ENCODE measurements at regions of chr17 and their contacts with region 1.

Region 1: DNA sequence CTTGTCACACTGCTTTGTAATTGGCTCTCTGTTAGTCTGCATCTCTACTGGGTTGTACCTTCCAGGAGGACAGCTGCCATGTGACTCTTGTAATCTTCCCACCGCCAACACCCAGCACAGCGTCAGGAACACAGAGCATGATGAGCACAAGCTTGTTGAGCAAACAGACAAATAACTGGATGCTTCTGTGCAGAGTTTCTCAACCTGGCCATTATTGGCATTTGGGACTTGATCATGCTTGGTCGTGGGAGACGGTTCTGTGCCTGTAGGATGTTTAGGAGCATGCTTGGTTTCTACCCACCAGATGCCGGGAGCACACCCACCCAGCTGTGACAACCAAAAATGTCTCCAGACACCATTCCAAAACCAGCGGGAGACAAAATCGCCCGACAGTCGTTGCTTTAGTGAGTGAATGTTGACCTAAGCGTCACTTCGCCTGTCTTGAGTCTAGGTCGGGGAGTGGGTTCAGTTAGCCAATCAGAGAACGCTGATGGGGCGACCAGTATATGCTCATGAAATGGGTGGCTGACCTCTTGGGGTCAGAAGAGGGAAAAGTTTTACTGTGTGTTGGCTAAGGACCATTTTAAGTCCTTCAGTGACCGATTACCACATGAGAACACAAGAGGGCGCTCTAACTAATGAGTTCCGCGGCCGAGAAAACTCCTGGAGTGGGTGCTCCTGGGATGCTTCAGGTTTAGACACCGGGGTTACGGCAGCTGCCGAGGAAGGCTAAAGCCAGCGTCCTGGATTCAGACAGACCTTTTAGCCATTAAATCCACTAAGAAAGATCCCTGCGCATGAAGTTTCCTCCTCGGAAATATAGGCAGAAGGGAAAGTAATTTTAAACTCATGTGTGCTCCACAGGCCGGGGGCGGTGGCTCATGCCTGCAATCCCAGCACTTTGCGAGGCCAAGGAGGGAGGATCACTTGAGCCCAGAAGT is 57.8 kb upstream of the TEX2 start:
- DNase-seq: no peak
- H3K4me3 ChIP-seq: peak overlapping the region; percentile 8; the same call in 1 of the 2 replicates
- CTCF ChIP-seq: peak; percentile 63

Region 2: GRCh38 chr17:64297467-64298098 is 23.3 kb before region 1 on chr17:
- CTCF ChIA-PET with region 1: interaction called, 23 read pairs
- POLR2A ChIA-PET with region 1: no interaction called
- DNase-seq: no peak
- H3K4me3 ChIP-seq: no peak overlapping the region
- CTCF ChIP-seq: no peak

Region 3: DNA sequence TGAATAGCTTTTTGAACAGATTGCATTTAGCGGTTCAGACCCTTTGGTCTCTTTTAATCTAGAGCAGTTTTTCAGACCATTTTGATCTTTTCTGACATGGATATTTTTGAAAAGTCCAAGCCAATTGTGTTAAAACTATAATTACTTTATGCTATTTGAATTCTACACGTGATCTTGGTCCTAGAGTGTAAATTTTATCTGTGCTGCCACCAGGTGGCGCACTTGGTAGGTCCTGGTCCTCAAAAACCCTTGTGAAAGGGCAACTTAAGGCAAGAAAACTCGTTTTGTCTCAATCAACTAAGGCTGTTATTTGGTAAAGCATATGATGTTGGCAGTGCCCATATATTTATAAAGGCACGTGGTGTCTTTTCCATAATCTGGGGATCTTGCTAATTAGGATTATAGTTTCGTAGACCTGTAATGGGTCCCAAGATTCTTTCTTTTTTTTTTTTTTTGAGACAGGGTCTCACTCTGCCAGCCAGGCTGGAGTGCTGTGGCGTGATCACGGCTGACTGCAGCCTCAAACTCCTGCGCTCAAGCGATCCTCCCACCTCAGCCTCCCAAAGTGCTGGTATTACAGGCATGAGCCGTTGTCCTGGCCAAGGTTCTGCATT is 13.9 kb before region 1 on chr17:
- CTCF ChIA-PET with region 1: interaction called, 57 read pairs
- POLR2A ChIA-PET with region 1: no interaction called
- DNase-seq: peak; percentile 2
- H3K4me3 ChIP-seq: no peak overlapping the region
- CTCF ChIP-seq: peak; percentile 59

Region 4: DNA sequence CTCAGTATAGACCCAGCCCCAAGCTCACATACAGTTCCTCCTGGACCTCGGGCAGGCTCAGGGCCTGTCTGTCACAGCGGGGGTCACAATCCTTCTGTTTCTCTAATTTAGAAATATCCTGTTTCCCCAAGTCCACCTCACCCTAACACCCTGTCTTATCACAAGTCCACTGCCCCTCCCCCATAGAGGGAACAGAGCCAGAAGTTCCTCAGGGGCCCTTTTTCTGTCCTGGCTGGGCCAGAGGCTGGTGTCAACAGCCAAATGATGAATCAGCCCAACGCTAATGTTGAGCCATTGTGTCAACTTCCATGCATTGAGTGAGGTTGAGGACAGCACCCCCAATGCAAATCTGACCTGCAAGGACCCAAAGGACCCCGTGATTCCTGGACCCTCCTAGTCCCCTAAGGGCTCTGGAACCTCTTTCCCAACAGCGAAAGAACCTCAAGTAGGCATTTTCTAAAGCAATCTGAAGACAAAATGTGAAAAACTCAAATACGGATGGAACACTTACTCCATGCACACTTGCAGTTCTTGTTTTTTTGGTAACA is 11.1 kb after region 1 on chr17:
- CTCF ChIA-PET with region 1: interaction called, 50 read pairs
- POLR2A ChIA-PET with region 1: no interaction called
- DNase-seq: no peak
- H3K4me3 ChIP-seq: no peak overlapping the region
- CTCF ChIP-seq: no peak

Region 5: GRCh38 chr17:64339516-64340490 is 18.9 kb after region 1 on chr17:
- CTCF ChIA-PET with region 1: interaction called, 20 read pairs
- POLR2A ChIA-PET with region 1: no interaction called
- DNase-seq: no peak
- H3K4me3 ChIP-seq: no peak overlapping the region
- CTCF ChIP-seq: no peak

Region 6: GRCh38 chr17:64382061-64382583 is 61.2 kb after region 1 on chr17:
- CTCF ChIA-PET with region 1: interaction called, 10 read pairs
- POLR2A ChIA-PET with region 1: no interaction called
- DNase-seq: no peak
- H3K4me3 ChIP-seq: no peak overlapping the region
- CTCF ChIP-seq: no peak

Region 7: GRCh38 chr17:64491034-64491859 is 170.4 kb after region 1 on chr17:
- CTCF ChIA-PET with region 1: interaction called, 11 read pairs
- POLR2A ChIA-PET with region 1: no interaction called
- DNase-seq: no peak
- H3K4me3 ChIP-seq: no peak overlapping the region
- CTCF ChIP-seq: peak; percentile 65

Measured in AG04449 (cell line).